ENCODE measurements at regions of chr22 and their contacts with region 1.

Region 1: DNA sequence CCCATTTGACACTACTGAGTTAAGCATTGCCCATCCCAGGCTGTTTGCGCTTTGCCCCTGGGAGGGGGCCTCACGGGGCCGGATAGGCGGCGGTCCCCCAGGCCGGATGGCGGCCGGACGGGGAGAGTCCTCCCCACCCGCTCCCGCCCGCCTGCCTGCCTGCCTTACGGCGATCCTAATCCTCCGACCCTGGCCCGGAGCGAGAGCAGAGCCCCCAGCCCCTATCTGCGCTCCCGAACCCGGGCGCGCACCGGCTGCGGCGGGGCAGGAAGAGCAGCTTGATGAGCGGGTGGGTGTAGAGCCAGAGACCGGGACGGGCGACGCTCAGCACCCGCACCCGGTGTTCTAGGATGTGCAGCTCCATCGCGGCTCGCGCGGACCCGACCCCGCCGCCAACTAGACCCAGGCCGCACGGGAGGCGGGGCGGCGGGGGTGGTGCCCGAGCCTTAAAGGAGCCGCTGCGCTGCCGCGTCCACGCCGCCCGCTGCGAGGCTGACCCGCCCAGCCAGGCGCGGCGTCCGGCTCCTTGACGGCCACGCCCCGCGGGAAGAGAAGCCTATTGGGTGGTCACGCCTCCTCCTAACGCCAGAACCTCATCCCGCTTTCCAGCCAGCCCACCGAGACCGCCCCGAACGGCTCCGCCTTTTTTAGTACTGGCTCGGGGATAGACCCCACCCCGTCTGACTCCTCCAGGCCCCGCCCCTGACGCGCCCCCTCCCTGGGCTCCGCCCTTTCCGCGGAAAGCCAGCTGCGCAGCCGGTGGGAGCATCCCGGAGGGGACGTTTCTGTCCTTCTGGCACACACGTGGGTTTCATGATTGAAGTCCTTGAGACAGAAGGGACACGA is at the start of gene CASTOR1:
- DNase-seq: peak; percentile 95
- H3K4me3 ChIP-seq: peak within 1 kb of the TSS; percentile 84
- H3K27ac ChIP-seq: peak within 1 kb of the TSS; percentile 73
- H3K27me3 ChIP-seq: no peaks in the 10 kb centered on the region
- CTCF ChIP-seq: no peak
- polyA plus RNA-seq, gene CASTOR1: 12.0 and 15.3 TPM in 2 replicates

Region 2: DNA sequence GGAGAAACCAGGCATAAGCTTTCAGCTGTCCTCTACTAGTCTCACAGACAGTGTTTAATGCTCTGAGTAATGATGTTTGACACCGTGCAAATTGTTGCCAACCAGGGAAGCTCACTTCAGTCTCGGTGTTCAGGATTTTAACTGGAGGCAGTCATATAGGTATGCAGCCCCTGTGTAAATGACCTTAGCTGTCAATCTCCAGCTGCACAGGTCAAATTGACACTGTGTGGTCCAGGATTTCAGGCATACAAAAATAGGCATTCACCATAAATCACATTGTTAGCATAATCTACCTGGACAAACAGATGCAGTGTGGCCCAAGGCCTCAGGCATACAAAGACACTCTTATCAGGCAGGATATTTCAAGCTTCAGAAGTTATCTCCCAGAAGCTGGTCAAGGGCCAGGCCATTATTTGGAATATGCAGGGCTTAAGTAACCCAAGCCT is 234.7 kb before region 1 on chr22:
- CTCF ChIA-PET with region 1: no interaction called
- POLR2A ChIA-PET with region 1: no interaction called
- DNase-seq: no peak
- H3K4me3 ChIP-seq: no peak overlapping the region
- H3K27ac ChIP-seq: no peak overlapping the region
- H3K27me3 ChIP-seq: peaks cover 3% of the 10 kb centered on the region
- CTCF ChIP-seq: no peak

Region 3: GRCh38 chr22:30262917-30263741 is 26.2 kb before region 1 on chr22:
- CTCF ChIA-PET with region 1: interaction called, 12 read pairs
- POLR2A ChIA-PET with region 1: interaction called, 3 read pairs
- DNase-seq: no peak
- H3K4me3 ChIP-seq: peak overlapping the region; percentile 32
- H3K27ac ChIP-seq: no peak overlapping the region
- H3K27me3 ChIP-seq: no peaks in the 10 kb centered on the region
- CTCF ChIP-seq: peak; percentile 97

Region 4: GRCh38 chr22:30308518-30309256 is 19.3 kb after region 1 on chr22:
- CTCF ChIA-PET with region 1: interaction called, 10 read pairs
- POLR2A ChIA-PET with region 1: interaction called, 6 read pairs
- DNase-seq: no peak
- H3K4me3 ChIP-seq: no peak overlapping the region
- H3K27ac ChIP-seq: no peak overlapping the region
- H3K27me3 ChIP-seq: no peaks in the 10 kb centered on the region
- CTCF ChIP-seq: no peak

Region 5: GRCh38 chr22:30326706-30327362 is 37.5 kb after region 1 on chr22 and contains the start of gene TBC1D10A:
- CTCF ChIA-PET with region 1: interaction called, 44 read pairs
- POLR2A ChIA-PET with region 1: interaction called, 14 read pairs
- DNase-seq: peak; percentile 57
- H3K4me3 ChIP-seq: peak within 1 kb of the TSS; percentile 83
- H3K27ac ChIP-seq: peak within 1 kb of the TSS; percentile 58
- H3K27me3 ChIP-seq: no peaks in the 10 kb centered on the region
- CTCF ChIP-seq: no peak
- polyA plus RNA-seq, gene TBC1D10A: 14.5 and 17.5 TPM in 2 replicates

Region 6: DNA sequence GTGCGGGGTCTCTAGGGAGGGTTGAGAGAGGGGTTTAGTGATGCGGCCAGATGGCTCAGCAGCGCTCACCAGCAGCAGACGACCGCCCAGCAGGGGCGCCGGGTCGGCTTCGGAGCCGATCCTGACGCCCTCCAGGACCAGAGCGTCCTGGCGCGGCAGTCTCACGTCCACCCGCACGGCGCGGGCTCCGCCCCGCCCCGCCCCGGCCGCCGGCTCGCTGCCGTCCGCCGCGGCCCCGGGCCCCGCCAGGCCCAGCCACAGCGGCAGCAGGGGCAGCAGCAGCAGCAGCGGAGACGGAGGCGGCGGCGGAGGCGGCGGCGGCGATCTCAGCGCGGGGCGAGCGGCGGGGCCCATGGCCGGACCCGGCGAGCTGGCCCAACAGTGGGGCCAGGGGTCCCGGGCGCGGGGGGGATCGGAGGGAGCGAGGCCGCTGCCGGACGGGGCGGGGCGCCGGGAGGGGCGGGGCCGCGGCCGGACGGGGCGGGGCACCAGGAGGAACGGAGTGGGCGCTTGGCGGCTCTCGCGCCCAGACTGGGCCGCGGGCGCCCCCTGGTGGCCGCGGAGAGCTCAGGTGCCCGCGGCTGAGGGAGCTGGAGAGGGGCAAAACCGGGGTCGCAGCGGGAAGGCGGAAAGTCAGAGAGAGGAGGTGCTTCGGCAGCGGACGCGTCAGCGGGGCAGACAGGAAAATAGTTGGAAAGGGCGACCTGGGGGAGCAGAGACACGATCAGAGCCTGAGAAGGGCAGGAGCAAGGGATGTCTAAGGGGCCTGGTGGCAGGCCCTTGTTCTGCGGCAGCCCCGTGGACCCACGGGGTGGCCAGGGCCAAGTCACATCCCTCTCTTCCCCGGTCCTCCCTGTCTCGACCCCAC is 97.8 kb after region 1 on chr22 and contains the start of gene RNF215:
- CTCF ChIA-PET with region 1: interaction called, 39 read pairs
- POLR2A ChIA-PET with region 1: interaction called, 6 read pairs
- DNase-seq: peak; percentile 18
- H3K4me3 ChIP-seq: peak within 1 kb of the TSS; percentile 72
- H3K27ac ChIP-seq: peak within 1 kb of the TSS; percentile 21
- H3K27me3 ChIP-seq: no peaks in the 10 kb centered on the region
- CTCF ChIP-seq: peak; percentile 75
- polyA plus RNA-seq, gene RNF215: 11.4 and 12.1 TPM in 2 replicates

Measured in AG04450 (cell line).